ENCODE measurements at regions of chr20 and their contacts with region 1.

Region 1: GRCh38 chr20:53915446-53916172 is 154.8 kb downstream of the BCAS1 start:
- DNase-seq: peak; percentile 85 to 96 (median 88)
- H3K4me3 ChIP-seq: peak overlapping the region; percentile 91 to 94
- H3K4me3 Mint-ChIP-seq: peak overlapping the region; percentile 91 to 98 (median 96)
- H3K27ac ChIP-seq: peak overlapping the region; percentile 51
- H3K27ac Mint-ChIP-seq: peak overlapping the region; percentile 83 to 98 (median 92)
- H3K4me1 ChIP-seq: peaks cover 15% of the 10 kb centered on the region
- H3K4me1 Mint-ChIP-seq: peaks cover 11 to 22% (median 17%) of the 10 kb centered on the region in 4 donors
- H3K27me3 ChIP-seq: no peaks in the 10 kb centered on the region
- H3K27me3 Mint-ChIP-seq: no peaks in the 10 kb centered on the region

Region 2: DNA sequence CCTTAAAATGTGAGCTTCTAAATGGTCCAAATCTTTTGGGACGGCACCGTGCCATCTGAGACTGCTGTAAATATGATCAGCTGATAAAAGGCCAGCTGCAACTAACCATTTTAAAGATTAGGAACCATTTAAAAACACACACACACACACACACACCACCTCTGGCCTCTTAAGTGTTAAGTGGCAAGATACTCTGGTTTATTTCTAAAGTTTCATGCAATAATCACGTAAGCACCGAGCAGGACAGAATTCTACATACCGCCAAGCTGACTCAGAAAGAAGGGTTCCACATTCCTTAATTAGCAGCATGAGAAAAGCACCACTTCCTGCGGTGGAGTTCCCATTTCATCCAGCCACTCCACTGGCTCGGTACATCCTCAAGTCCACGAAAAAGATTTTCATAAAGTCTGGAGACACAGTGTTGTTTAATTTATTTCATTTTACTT is 304.1 kb before region 1 on chr20:
- CTCF ChIA-PET with region 1: interaction called, 7 read pairs
- POLR2A ChIA-PET with region 1: interaction called, 13 read pairs
- intact Hi-C with region 1: no loop called
- DNase-seq: no peak
- H3K4me3 ChIP-seq: no peak overlapping the region
- H3K4me3 Mint-ChIP-seq: no peak overlapping the region
- H3K27ac ChIP-seq: no peak overlapping the region
- H3K27ac Mint-ChIP-seq: peak overlapping the region in 2 of 7 donors; percentile 13 to 73
- H3K4me1 ChIP-seq: peaks cover 33% of the 10 kb centered on the region
- H3K4me1 Mint-ChIP-seq: peaks cover 13 to 28% (median 22%) of the 10 kb centered on the region in 4 donors
- H3K27me3 ChIP-seq: no peaks in the 10 kb centered on the region
- H3K27me3 Mint-ChIP-seq: no peaks in the 10 kb centered on the region

Region 3: GRCh38 chr20:53643031-53643832 is 272.4 kb before region 1 on chr20:
- CTCF ChIA-PET with region 1: interaction called, 13 read pairs
- POLR2A ChIA-PET with region 1: interaction called, 18 read pairs
- intact Hi-C with region 1: no loop called
- DNase-seq: peak; percentile 67 to 84 (median 73)
- H3K4me3 ChIP-seq: peak overlapping the region; percentile 19 to 26
- H3K4me3 Mint-ChIP-seq: peak overlapping the region; percentile 75 to 93 (median 86)
- H3K27ac ChIP-seq: peak overlapping the region; percentile 59
- H3K27ac Mint-ChIP-seq: peak overlapping the region; percentile 94 to 99 (median 98)
- H3K4me1 ChIP-seq: peaks cover 37% of the 10 kb centered on the region
- H3K4me1 Mint-ChIP-seq: peaks cover 14 to 52% (median 37%) of the 10 kb centered on the region in 4 donors
- H3K27me3 ChIP-seq: no peaks in the 10 kb centered on the region
- H3K27me3 Mint-ChIP-seq: no peaks in the 10 kb centered on the region

Region 4: DNA sequence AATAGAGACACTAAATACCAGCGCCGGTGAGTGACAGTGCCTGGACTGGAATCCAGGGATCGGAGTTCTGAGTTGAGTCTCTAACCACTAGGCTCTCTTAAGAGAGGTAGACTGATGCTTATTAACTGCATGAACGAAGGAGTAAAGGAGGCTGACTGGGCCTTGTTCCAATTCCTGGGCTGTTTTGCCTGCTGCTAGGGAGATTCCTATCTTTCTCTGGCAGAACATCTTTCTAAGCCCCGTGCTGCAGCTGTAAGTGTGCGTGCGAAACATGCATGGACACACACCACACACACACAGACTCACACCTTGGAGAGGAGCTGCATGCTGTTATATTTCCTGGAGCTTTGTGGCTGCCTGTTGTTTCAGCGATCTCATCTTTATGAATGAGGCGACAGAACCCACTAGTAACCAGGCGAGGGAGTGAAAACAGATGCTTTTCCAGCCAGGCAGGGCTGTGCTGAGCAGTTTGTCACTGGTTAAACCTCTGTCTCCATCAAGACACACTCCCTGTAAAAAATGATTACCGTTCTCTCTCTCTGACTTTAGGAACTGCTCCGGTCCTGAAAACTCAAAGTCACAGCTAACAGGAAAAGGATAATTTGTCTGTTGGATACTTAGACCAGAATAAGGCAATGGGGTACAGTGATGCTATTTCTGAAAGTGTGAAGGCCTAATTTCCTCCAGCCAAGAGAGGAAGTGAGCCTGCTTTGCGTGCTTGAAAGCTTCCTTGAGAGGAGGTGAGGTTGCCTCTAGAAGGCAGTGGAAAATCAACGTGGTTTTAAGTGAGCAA is 164.6 kb before region 1 on chr20:
- CTCF ChIA-PET with region 1: interaction called, 5 read pairs
- POLR2A ChIA-PET with region 1: interaction called, 7 read pairs
- intact Hi-C with region 1: loop called (anchors 1 kb)
- DNase-seq: peak in 4 of 5 donors; percentile 28 to 54 (median 40)
- H3K4me3 ChIP-seq: no peak overlapping the region
- H3K4me3 Mint-ChIP-seq: peak overlapping the region in 7 of 8 donors; percentile 52 to 82 (median 76)
- H3K27ac ChIP-seq: peak overlapping the region; percentile 55
- H3K27ac Mint-ChIP-seq: peak overlapping the region; percentile 86 to 98 (median 95)
- H3K4me1 ChIP-seq: peaks cover 63% of the 10 kb centered on the region
- H3K4me1 Mint-ChIP-seq: peaks cover 48 to 72% (median 63%) of the 10 kb centered on the region in 4 donors
- H3K27me3 ChIP-seq: no peaks in the 10 kb centered on the region
- H3K27me3 Mint-ChIP-seq: no peaks in the 10 kb centered on the region

Region 5: GRCh38 chr20:53899351-53900167 is 16.1 kb before region 1 on chr20:
- CTCF ChIA-PET with region 1: interaction called, 19 read pairs
- POLR2A ChIA-PET with region 1: interaction called, 7 read pairs
- intact Hi-C with region 1: loop called (anchors 2 kb)
- DNase-seq: peak; percentile 64 to 81 (median 68)
- H3K4me3 ChIP-seq: no peak overlapping the region
- H3K4me3 Mint-ChIP-seq: peak overlapping the region in 5 of 8 donors; percentile 3 to 56 (median 47)
- H3K27ac ChIP-seq: peak overlapping the region; percentile 6
- H3K27ac Mint-ChIP-seq: peak overlapping the region; percentile 65 to 88 (median 85)
- H3K4me1 ChIP-seq: peaks cover 17% of the 10 kb centered on the region
- H3K4me1 Mint-ChIP-seq: peaks cover 12 to 31% (median 24%) of the 10 kb centered on the region in 4 donors
- H3K27me3 ChIP-seq: no peaks in the 10 kb centered on the region
- H3K27me3 Mint-ChIP-seq: no peaks in the 10 kb centered on the region

Region 6: DNA sequence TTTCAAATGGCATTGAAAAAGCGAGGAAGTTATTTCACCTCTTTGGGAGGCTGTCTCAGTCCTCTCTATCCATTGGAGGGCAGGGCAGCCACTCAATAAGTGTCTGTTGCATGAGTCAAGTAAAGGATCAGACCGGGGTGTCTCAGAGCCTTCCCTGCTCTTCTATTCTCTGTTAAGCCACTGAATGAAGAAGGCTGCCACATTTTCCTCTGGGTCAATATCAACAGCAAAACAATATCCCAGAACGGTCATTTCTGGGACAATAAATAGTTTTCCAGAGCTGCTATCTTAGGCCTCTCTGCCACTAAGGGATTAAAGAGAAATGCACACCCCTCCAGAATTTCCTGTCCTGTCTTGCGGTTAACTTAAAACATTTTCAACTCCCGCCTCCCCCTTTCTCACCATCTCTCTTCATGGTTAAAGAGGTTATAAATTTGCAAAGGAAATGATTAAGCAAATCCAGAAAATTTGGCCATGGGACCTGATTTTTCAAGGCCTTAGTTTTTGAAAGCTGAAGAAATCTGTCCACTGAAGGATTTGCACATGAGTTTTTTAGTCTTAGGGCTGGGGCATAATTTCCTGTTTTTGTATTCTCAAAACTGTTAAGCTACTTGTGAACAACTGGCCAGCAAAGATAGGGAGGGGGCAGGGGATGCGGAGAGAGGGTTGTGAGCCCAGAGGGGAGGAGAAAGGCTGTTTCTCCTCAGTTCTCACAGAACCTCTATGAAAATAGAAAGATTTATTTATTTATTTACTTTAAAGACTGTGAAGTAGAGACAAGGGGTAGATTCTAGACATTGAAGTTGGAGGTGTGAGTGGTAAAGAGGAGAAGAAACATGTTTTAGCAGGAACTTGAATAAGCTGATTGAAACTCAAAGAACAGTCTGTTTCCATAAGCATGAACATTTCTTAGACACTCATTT is 19.1 kb after region 1 on chr20:
- CTCF ChIA-PET with region 1: interaction called, 174 read pairs
- POLR2A ChIA-PET with region 1: interaction called, 32 read pairs
- intact Hi-C with region 1: no loop called
- DNase-seq: peak in 2 of 5 donors; percentile 19 to 43
- H3K4me3 ChIP-seq: no peak overlapping the region
- H3K4me3 Mint-ChIP-seq: peak overlapping the region; percentile 45 to 86 (median 76)
- H3K27ac ChIP-seq: peak overlapping the region; percentile 1
- H3K27ac Mint-ChIP-seq: peak overlapping the region; percentile 54 to 87 (median 76)
- H3K4me1 ChIP-seq: peaks cover 30% of the 10 kb centered on the region
- H3K4me1 Mint-ChIP-seq: peaks cover 24 to 40% (median 32%) of the 10 kb centered on the region in 4 donors
- H3K27me3 ChIP-seq: no peaks in the 10 kb centered on the region
- H3K27me3 Mint-ChIP-seq: peaks cover 0 to 2% of the 10 kb centered on the region in 2 donors

Region 7: GRCh38 chr20:54004445-54004844 is 88.8 kb after region 1 on chr20:
- CTCF ChIA-PET with region 1: no interaction called
- POLR2A ChIA-PET with region 1: no interaction called
- intact Hi-C with region 1: no loop called
- DNase-seq: no peak
- H3K4me3 ChIP-seq: no peak overlapping the region
- H3K4me3 Mint-ChIP-seq: no peak overlapping the region
- H3K27ac ChIP-seq: no peak overlapping the region
- H3K27ac Mint-ChIP-seq: no peak overlapping the region
- H3K4me1 ChIP-seq: no peaks in the 10 kb centered on the region
- H3K4me1 Mint-ChIP-seq: no peaks in the 10 kb centered on the region
- H3K27me3 ChIP-seq: no peaks in the 10 kb centered on the region
- H3K27me3 Mint-ChIP-seq: peaks cover 16% of the 10 kb centered on the region in 2 donors

Region 8: DNA sequence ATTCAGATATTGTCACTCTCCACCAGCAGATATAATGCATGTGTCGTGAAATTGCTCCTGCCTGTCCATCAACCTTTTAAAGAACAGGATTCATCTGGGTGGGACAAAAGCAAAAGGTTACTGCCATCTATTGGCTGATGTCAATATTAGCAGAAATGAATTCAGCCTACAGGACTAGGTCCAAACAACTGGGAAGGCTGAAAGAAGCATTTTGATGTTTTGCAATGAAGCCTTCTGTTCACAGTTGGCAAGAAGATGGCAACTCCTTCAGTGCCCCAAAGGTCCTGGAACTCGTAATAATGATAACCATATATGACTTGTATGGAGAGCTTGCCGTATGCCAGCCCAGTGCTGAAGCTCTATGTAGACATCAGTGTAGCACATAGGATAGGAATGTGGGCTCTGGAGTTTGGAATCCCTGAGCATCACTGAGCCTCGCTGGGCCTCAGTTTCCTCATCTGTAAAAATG is 147.2 kb after region 1 on chr20:
- CTCF ChIA-PET with region 1: interaction called, 5 read pairs
- POLR2A ChIA-PET with region 1: no interaction called
- intact Hi-C with region 1: loop called (anchors 1 kb)
- DNase-seq: peak in 4 of 5 donors; percentile 12 to 32 (median 20)
- H3K4me3 ChIP-seq: no peak overlapping the region
- H3K4me3 Mint-ChIP-seq: no peak overlapping the region
- H3K27ac ChIP-seq: no peak overlapping the region
- H3K27ac Mint-ChIP-seq: peak overlapping the region in 1 of 7 donors; percentile 38
- H3K4me1 ChIP-seq: no peaks in the 10 kb centered on the region
- H3K4me1 Mint-ChIP-seq: peaks cover 0 to 10% (median 2%) of the 10 kb centered on the region in 4 donors
- H3K27me3 ChIP-seq: no peaks in the 10 kb centered on the region
- H3K27me3 Mint-ChIP-seq: peaks cover 0 to 2% of the 10 kb centered on the region in 2 donors